ENCODE measurements at regions of chr10 and their contacts with region 1.

Region 1: DNA sequence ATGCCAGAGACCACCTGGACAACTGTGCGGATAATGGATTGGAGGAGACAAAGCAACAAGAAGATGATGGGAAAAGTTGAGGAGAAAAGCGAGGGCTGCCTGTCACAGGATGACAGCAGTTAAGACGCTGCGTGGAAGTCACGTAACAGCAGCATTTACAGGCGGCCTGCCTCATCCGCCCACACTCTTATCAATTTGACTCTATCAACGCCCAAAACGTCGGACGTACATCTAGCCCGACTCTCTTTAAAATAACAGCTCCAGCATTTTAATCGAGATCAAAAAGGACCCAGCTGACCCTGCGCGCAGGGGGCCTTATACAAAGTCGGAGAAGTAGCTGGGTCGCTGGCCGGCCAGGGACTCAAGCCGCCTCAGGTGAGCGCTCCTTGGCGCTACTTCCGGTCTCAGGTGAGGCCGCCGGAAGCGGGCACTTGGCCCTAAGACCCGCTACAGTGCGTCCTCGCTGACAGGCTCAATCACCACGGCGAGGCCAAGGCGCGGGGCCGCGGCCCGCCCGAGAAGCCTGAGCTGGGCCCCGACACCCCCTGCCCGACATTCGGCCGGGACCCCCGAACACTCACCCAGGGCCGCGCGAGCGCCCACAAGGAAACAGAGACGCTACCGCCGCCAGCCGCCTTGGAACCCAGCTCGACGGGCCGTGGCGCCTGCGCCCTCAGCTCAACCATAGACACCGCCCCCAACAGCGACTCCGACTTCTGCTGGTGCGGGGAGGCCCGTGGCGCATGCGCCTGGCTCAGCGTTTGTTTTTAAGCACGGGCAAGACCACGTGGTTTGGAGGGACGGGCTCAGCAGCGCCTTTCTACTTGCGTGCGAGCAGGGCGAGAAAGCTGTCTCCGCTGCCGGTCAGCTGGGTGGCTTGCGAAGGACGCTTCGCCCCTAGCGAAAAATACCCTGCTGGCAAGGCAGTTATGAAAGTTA is at the start of gene ERCC6:
- DNase-seq: peak; percentile 91
- H3K4me3 ChIP-seq: peak within 1 kb of the TSS; percentile 75
- CTCF ChIP-seq: no peak

Region 2: DNA sequence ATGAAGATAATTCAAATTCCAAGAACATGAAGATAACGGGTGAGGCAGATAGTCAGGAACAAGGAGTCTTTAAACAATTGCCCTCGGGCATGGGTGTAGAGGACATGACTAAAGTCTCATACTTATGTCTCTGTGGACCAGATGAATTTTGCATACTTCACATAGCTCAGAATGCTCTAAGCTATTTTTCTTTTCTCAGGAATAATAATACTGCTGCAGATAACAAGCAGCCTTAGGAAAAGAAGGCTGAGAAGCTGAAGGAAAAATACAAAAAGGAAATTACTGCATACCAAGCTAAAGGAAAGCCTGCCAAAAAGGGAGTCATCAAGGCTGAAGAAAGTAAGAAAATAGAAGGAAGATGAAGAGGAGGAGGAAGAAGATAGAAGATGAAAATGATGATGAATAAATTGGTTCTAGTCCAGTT is 13.6 kb after region 1 on chr10:
- CTCF ChIA-PET with region 1: interaction called, 7 read pairs
- POLR2A ChIA-PET with region 1: interaction called, 15 read pairs
- DNase-seq: peak; percentile 80
- H3K4me3 ChIP-seq: peak overlapping the region; percentile 1; the same call in 1 of the 2 replicates
- CTCF ChIP-seq: no peak

Region 3: GRCh38 chr10:49568235-49568634 is 29.6 kb after region 1 on chr10:
- CTCF ChIA-PET with region 1: interaction called, 3 read pairs
- POLR2A ChIA-PET with region 1: interaction called, 11 read pairs
- DNase-seq: no peak
- H3K4me3 ChIP-seq: no peak overlapping the region
- CTCF ChIP-seq: no peak

Measured in AG04449 (cell line).